PC-3 (cell line): ENCODE measurements at regions of chr5 and their contacts with region 1.

Region 1: GRCh38 chr5:173941758-173942401 is 47.1 kb upstream of the C5orf47 start:
- DNase-seq: peak; percentile 64
- ATAC-seq: peak; percentile 82
- H3K4me3 ChIP-seq: peak overlapping the region; percentile 28; the same call in 1 of the 2 replicates
- H3K27ac ChIP-seq: peak overlapping the region; percentile 56
- H3K4me1 ChIP-seq: peaks cover 43% of the 10 kb centered on the region
- H3K27me3 ChIP-seq: no peaks in the 10 kb centered on the region
- CTCF ChIP-seq: no peak

Region 2: DNA sequence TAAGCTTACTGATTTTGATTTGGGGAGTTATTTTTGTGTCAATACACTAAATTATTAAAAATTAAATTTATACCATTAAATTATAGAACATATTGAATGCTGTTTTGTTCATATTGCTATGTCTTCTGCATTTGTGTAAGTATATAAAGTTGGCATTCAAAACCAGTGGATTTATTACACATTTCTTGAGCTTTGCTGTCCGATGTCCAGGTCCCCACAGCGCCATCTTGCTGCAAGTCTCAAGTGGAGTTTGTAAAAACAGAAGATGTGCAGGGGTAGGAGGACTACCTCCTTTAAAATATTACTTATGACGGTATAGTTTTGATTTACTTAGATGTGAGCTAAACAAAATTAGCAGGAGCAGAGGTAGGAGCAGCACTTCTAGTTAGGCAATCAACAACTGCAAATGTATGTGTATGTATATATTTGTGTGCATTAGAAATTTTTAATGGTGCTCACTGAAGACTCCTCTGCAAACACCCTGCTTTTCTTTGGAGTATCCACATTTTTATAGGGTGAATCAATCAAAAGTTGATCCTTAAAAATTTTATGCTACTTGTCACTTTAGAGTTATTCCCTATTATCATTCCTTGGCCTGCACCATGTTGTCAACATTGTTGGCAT is 16.3 kb before region 1 on chr5:
- CTCF ChIA-PET with region 1: interaction called, 3 read pairs
- POLR2A ChIA-PET with region 1: no interaction called
- intact Hi-C with region 1: loop called (anchors 2 kb)
- DNase-seq: peak; percentile 72
- ATAC-seq: peak; percentile 23
- H3K4me3 ChIP-seq: no peak overlapping the region
- H3K27ac ChIP-seq: peak overlapping the region; percentile 27
- H3K4me1 ChIP-seq: peaks cover 29% of the 10 kb centered on the region
- H3K27me3 ChIP-seq: no peaks in the 10 kb centered on the region
- CTCF ChIP-seq: peak; percentile 82